Sigmoid colon (tissue), 7 donors: ENCODE measurements at regions of chr12 and their contacts with region 1.

Region 1: DNA sequence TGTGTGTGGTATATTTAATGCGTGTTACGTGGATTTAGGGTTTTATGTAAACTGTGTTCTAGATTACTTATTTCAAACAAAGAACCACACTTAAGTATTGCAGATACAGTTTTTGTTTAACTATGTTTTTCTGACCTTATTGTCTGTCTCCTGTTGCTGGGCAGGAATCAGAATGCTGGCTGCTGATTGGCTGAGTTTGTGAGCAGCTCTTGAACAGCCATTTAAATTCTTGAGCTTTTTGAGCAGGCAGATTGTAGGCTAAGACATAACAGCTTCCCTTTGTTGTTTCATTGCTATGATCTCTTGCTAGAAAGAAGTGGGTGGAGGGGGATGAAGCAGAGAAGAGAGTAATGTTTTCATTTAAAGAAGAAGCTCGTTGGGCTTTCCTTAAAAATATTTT is 52.2 kb downstream of the ATF7IP start:
- DNase-seq: peak; percentile 77
- H3K4me3 ChIP-seq: peak overlapping the region in 1 of 4 donors; percentile 23
- H3K27ac ChIP-seq: peak overlapping the region in 2 of 4 donors; percentile 46 to 62
- H3K4me1 ChIP-seq: peaks cover 0 to 48% (median 33%) of the 10 kb centered on the region in 4 donors
- H3K27me3 ChIP-seq: no peaks in the 10 kb centered on the region
- CTCF ChIP-seq: no peak
- EP300 ChIP-seq: no peak
- POLR2A ChIP-seq: no peak

Region 2: DNA sequence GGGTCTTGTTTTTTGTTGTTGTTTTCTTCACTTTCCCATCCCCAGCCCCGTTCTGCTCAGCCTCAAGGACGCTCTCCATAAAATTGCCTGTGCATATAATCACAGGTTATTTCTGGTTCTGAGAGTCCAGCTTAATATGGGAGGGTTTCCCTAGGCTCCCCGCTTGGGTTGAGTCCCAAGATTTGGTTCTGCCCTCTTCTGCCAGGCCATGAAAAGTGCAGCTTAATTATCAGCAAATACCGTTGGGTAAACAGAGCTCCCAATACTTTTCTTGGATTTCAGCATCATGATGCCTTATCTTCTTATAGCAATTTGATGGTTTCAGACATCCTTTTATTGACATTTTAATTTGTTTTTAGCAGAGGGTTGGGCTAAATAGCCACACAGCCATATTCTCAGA is 511.9 kb before region 1 on chr12:
- intact Hi-C with region 1: no loop called
- DNase-seq: no peak
- H3K4me3 ChIP-seq: no peak overlapping the region
- H3K27ac ChIP-seq: no peak overlapping the region
- H3K4me1 ChIP-seq: no peaks in the 10 kb centered on the region
- H3K27me3 ChIP-seq: no peaks in the 10 kb centered on the region
- CTCF ChIP-seq: no peak
- EP300 ChIP-seq: no peak
- POLR2A ChIP-seq: no peak

Region 3: GRCh38 chr12:14257734-14258574 is 159.8 kb before region 1 on chr12:
- intact Hi-C with region 1: loop called (anchors 5 kb)
- DNase-seq: peak; percentile 95
- H3K4me3 ChIP-seq: peak overlapping the region in 1 of 4 donors; percentile 20
- H3K27ac ChIP-seq: peak overlapping the region; percentile 79 to 91 (median 83)
- H3K4me1 ChIP-seq: peaks cover 5 to 56% (median 48%) of the 10 kb centered on the region in 4 donors
- H3K27me3 ChIP-seq: no peaks in the 10 kb centered on the region
- CTCF ChIP-seq: no peak
- EP300 ChIP-seq: peak in 3 of 4 donors; percentile 30 to 63 (median 54)
- POLR2A ChIP-seq: no peak